Endothelial cell of umbilical vein (primary cell): ENCODE measurements at regions of chr1 and their contacts with region 1.

Region 1: DNA sequence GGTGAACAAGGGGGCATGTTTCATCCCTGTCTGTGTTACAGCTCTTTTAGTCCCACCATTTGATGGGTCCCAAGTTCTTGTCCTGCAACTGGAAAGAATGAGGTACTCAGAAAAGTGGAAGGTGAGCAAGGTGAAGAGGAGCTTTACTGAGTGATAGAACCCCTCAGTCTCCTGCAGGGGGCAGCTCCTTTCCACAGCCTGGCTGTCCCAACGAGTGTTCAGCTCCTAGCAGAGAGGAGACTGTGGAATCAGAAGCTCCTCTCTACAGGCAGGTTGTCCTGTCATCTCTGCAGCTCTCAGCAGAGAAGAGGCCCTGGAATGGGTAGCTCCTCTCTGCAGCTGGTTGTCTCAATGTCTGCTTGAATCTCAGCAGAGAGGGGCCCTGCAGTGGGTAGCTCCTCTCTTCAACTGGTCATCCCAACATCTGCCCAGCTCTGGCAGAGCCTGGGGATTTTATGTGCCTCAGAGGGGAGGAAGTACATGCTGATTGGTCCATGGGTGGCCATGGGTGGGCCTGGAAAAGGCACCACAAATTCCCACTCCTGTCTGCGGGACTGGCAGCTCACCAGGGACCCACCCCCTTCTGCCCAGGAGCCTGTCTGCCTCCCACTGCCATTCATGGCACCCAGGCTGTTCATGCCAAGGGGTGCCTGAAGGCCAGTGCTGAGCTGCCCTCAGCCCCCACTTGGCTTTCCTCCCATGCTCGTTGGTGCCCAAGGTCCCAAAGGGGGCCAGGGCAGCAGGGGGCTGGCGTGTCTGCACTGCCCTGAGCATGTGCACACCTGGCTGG is 25.7 kb downstream of the LDLRAD1 start:
- DNase-seq: no peak
- H3K4me3 ChIP-seq: no peak overlapping the region
- H3K27ac ChIP-seq: no peak overlapping the region
- H3K4me1 ChIP-seq: no peaks in the 10 kb centered on the region
- H3K27me3 ChIP-seq: no peaks in the 10 kb centered on the region
- CTCF ChIP-seq: peak in 1 of 2 donors; percentile 39
- POLR2A ChIP-seq: no peak

Region 2: GRCh38 chr1:53878492-53879105 is 113.7 kb before region 1 on chr1:
- CTCF ChIA-PET with region 1: no interaction called
- POLR2A ChIA-PET with region 1: no interaction called
- dilution Hi-C with region 1: no loop called
- intact Hi-C with region 1: no loop called
- DNase-seq: peak; percentile 58
- H3K4me3 ChIP-seq: no peak overlapping the region
- H3K27ac ChIP-seq: no peak overlapping the region
- H3K4me1 ChIP-seq: no peaks in the 10 kb centered on the region
- H3K27me3 ChIP-seq: no peaks in the 10 kb centered on the region
- CTCF ChIP-seq: peak; percentile 43 to 55
- POLR2A ChIP-seq: no peak

Region 3: GRCh38 chr1:54006508-54006907 is 14.2 kb after region 1 on chr1:
- CTCF ChIA-PET with region 1: interaction called, 10 read pairs
- POLR2A ChIA-PET with region 1: no interaction called
- dilution Hi-C with region 1: no loop called
- intact Hi-C with region 1: no loop called
- DNase-seq: no peak
- H3K4me3 ChIP-seq: no peak overlapping the region
- H3K27ac ChIP-seq: no peak overlapping the region
- H3K4me1 ChIP-seq: no peaks in the 10 kb centered on the region
- H3K27me3 ChIP-seq: peaks cover 0 to 4% of the 10 kb centered on the region in 2 experiments
- CTCF ChIP-seq: no peak
- POLR2A ChIP-seq: no peak

Region 4: GRCh38 chr1:54081306-54082270 is 89.3 kb after region 1 on chr1:
- CTCF ChIA-PET with region 1: interaction called, 23 read pairs
- POLR2A ChIA-PET with region 1: interaction called, 3 read pairs
- dilution Hi-C with region 1: no loop called
- intact Hi-C with region 1: no loop called
- DNase-seq: peak; percentile 59
- H3K4me3 ChIP-seq: no peak overlapping the region
- H3K27ac ChIP-seq: no peak overlapping the region
- H3K4me1 ChIP-seq: no peaks in the 10 kb centered on the region
- H3K27me3 ChIP-seq: no peaks in the 10 kb centered on the region
- CTCF ChIP-seq: peak; percentile 85 to 92
- POLR2A ChIP-seq: no peak

Region 5: GRCh38 chr1:54229281-54229891 is 237.1 kb after region 1 on chr1:
- CTCF ChIA-PET with region 1: no interaction called
- POLR2A ChIA-PET with region 1: no interaction called
- dilution Hi-C with region 1: no loop called
- intact Hi-C with region 1: no loop called
- DNase-seq: peak; percentile 31
- H3K4me3 ChIP-seq: no peak overlapping the region
- H3K27ac ChIP-seq: no peak overlapping the region
- H3K4me1 ChIP-seq: no peaks in the 10 kb centered on the region
- H3K27me3 ChIP-seq: no peaks in the 10 kb centered on the region
- CTCF ChIP-seq: no peak
- POLR2A ChIP-seq: no peak

Region 6: DNA sequence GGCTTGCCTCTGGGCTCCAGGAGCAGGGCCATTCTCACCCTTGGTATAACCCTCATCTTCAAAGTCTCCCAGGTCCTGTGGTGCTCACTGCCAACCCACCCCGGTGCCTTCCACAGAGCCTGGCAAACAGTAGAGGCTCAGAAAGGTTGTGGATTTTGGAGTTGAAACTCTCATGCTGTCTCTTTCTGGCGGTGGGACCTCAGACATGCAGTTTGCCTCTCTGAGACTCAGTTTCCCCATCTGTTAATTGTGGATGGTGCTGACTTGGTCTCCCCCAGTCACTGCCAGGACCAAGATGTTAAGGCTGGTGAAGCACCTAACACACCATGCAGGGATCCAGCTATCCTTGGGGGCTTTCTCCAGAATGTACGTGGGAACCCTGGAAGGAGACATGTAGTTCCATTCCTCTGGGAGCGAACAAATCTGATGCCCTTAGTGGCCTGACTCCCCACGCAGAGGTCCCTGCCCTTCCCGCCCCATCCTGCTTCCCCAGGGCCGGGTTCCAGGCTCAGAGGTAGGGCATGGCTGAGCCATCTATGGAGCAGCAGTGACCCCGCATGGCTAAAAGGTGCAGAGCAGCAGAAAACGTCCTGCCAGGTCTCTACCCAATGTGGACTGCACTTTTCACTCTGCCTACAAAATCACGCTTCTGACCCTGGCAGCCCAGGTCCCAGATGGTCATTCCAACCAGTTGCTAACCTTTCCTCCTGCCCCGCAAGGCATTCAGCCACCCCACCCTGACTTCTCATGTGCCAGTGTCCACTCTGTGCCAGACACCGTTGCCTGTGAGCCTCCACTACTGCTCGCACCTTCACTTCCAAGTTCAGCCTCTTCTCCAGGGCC is 818.0 kb after region 1 on chr1:
- CTCF ChIA-PET with region 1: interaction called, 10 read pairs
- POLR2A ChIA-PET with region 1: no interaction called
- dilution Hi-C with region 1: no loop called
- intact Hi-C with region 1: no loop called
- DNase-seq: peak; percentile 54
- H3K4me3 ChIP-seq: no peak overlapping the region
- H3K27ac ChIP-seq: no peak overlapping the region
- H3K4me1 ChIP-seq: no peaks in the 10 kb centered on the region
- H3K27me3 ChIP-seq: no peaks in the 10 kb centered on the region
- CTCF ChIP-seq: peak; percentile 76 to 89
- POLR2A ChIP-seq: no peak

Region 7: GRCh38 chr1:55741516-55741915 is 1749.2 kb after region 1 on chr1:
- CTCF ChIA-PET with region 1: no interaction called
- POLR2A ChIA-PET with region 1: no interaction called
- dilution Hi-C with region 1: no loop called
- intact Hi-C with region 1: no loop called
- DNase-seq: no peak
- H3K4me3 ChIP-seq: no peak overlapping the region
- H3K27ac ChIP-seq: no peak overlapping the region
- H3K4me1 ChIP-seq: no peaks in the 10 kb centered on the region
- H3K27me3 ChIP-seq: peaks cover 0 to 4% of the 10 kb centered on the region in 2 experiments
- CTCF ChIP-seq: no peak
- POLR2A ChIP-seq: no peak